Caco-2 (cell line): ENCODE measurements at regions of chr2 and their contacts with region 1.

Region 1: GRCh38 chr2:215002500-215002899 is 135.9 kb downstream of the ABCA12 start:
- DNase-seq: peak; percentile 36 to 48
- H3K4me3 ChIP-seq: no peak overlapping the region
- H3K4me3 Mint-ChIP-seq: no peak overlapping the region
- H3K27ac Mint-ChIP-seq: no peak overlapping the region
- H3K4me1 ChIP-seq: no peaks in the 10 kb centered on the region
- H3K4me1 Mint-ChIP-seq: no peaks in the 10 kb centered on the region
- H3K27me3 ChIP-seq: no peaks in the 10 kb centered on the region
- H3K27me3 Mint-ChIP-seq: peaks cover 5% of the 10 kb centered on the region
- CTCF ChIP-seq: peak; percentile 63 to 65

Region 2: DNA sequence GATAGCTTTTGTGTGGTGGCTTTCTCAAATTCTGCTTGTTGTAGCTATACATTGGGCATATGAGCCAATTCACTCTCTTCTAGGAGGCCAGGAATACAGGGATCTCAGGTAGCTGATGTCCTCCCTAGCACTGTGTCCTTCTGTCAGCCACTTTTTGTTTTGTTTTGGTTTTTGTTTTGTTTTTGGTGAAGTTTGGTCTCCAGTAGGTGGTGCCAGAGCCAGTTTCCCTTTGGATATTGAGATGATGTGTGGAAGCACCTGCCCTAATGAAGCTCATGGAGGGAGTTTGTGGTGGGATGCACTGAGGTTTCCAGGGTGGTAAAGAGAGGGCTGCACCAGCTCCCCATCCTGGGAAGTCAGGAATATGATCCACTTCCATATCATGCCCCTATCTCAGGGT is 692.2 kb before region 1 on chr2:
- CTCF ChIA-PET with region 1: no interaction called
- POLR2A ChIA-PET with region 1: no interaction called
- intact Hi-C with region 1: loop called (anchors 1 kb)
- DNase-seq: peak in 1 of 2 experiments; percentile 9
- H3K4me3 ChIP-seq: no peak overlapping the region
- H3K4me3 Mint-ChIP-seq: no peak overlapping the region
- H3K27ac Mint-ChIP-seq: no peak overlapping the region
- H3K4me1 ChIP-seq: no peaks in the 10 kb centered on the region
- H3K4me1 Mint-ChIP-seq: no peaks in the 10 kb centered on the region
- H3K27me3 ChIP-seq: no peaks in the 10 kb centered on the region
- H3K27me3 Mint-ChIP-seq: no peaks in the 10 kb centered on the region
- CTCF ChIP-seq: peak; percentile 9 to 30

Region 3: DNA sequence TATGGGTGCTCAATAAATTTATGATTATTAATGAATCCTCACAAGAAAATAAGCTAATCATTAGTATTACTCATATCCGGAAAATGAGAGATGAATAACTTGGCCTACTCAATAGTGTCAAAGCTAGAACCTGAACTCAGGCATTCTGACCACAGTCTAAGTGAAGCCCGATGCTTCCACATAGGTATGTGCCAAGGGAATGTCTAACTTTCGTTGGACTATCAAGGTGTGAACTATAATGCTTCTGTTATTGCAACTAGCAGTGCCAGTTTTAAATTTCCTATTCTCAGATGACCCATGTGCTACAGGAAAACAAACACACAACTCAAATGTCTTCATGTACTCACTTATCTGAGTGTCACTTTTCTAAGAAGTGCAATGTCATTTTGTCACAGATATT is 194.8 kb before region 1 on chr2:
- CTCF ChIA-PET with region 1: no interaction called
- POLR2A ChIA-PET with region 1: no interaction called
- intact Hi-C with region 1: no loop called
- DNase-seq: no peak
- H3K4me3 ChIP-seq: peak overlapping the region; percentile 68
- H3K4me3 Mint-ChIP-seq: peak overlapping the region; percentile 77
- H3K27ac Mint-ChIP-seq: peak overlapping the region; percentile 95
- H3K4me1 ChIP-seq: peaks cover 12% of the 10 kb centered on the region; the same call in 1 of the 2 replicates
- H3K4me1 Mint-ChIP-seq: peaks cover 5% of the 10 kb centered on the region
- H3K27me3 ChIP-seq: no peaks in the 10 kb centered on the region
- H3K27me3 Mint-ChIP-seq: no peaks in the 10 kb centered on the region
- CTCF ChIP-seq: no peak

Region 4: GRCh38 chr2:215435809-215436704 is 433.6 kb after region 1 on chr2 and contains the start of gene FN1:
- CTCF ChIA-PET with region 1: no interaction called
- POLR2A ChIA-PET with region 1: no interaction called
- intact Hi-C with region 1: no loop called
- DNase-seq: peak; percentile 95 to 96
- H3K4me3 ChIP-seq: peak within 1 kb of the TSS; percentile 99
- H3K4me3 Mint-ChIP-seq: peak within 1 kb of the TSS; percentile 84
- H3K27ac Mint-ChIP-seq: peak within 1 kb of the TSS; percentile 94
- H3K4me1 ChIP-seq: peaks cover 40% of the 10 kb centered on the region
- H3K4me1 Mint-ChIP-seq: peaks cover 26% of the 10 kb centered on the region
- H3K27me3 ChIP-seq: no peaks in the 10 kb centered on the region
- H3K27me3 Mint-ChIP-seq: no peaks in the 10 kb centered on the region
- CTCF ChIP-seq: no peak
- total RNA-seq, gene FN1: 3,805 and 3,872 TPM in 2 replicates